ENCODE measurements at regions of chr12 and their contacts with region 1.

Region 1: GRCh38 chr12:120265473-120266179 is at the start of gene PXN:
- DNase-seq: peak; percentile 91
- ATAC-seq: peak; percentile 89 to 97
- H3K4me3 ChIP-seq: peak within 1 kb of the TSS; percentile 90
- H3K27ac ChIP-seq: peak within 1 kb of the TSS; percentile 91
- H3K4me1 ChIP-seq: peaks cover 67% of the 10 kb centered on the region
- H3K27me3 ChIP-seq: no peaks in the 10 kb centered on the region
- CTCF ChIP-seq: peak; percentile 85
- total RNA-seq, gene PXN: 105 TPM

Region 2: DNA sequence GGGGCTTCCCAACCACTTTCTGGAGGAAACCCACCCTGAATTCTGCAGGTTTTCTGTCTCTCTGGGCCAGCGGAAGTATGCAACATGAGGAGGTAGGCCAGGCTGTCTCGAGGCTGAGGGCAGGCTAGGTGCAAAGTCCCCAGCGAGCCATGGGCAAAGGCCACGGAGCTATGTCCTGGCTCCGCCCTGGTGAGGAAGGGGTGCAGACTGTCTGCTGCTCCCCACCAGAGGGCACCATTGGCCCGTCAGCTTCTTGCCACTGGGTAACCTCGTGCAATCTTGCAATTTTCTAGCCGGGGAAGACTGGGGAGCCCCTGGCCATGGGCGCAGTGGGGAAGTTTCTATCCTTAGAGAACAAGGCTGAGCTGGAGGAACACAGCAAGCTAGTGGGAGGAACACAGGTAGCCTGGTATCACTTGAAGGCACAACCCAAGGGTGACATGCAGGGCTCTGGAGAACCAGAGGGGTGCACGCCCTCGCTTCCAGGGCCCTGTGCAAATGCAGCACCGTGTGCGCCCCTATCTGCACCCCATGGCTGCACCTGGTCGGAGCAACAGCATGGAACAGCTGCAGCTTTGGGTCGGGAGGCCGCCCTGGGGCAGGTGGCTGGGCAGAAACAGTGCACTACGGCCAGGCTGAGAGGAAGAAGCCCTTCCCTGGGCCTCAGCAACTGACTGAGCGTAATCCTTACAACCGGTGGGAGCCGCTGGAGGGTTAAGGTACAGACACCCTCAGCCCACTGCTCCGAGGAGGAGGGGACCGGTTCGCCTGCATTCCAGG is 37.1 kb before region 1 on chr12:
- intact Hi-C with region 1: loop called (anchors 5 kb)
- DNase-seq: peak; percentile 88
- ATAC-seq: peak; percentile 63 to 71
- H3K4me3 ChIP-seq: peak overlapping the region; percentile 33
- H3K27ac ChIP-seq: peak overlapping the region; percentile 88
- H3K4me1 ChIP-seq: peaks cover 97% of the 10 kb centered on the region
- H3K27me3 ChIP-seq: no peaks in the 10 kb centered on the region
- CTCF ChIP-seq: peak; percentile 95

Measured in lower lobe of right lung (tissue), 2 donors.